ENCODE measurements at regions of chr2 and their contacts with region 1.

Region 1: GRCh38 chr2:138827426-138828054 is 47.4 kb upstream of the NXPH2 start:
- DNase-seq: peak; percentile 13 to 67 (median 32)
- ATAC-seq: peak; percentile 81
- H3K4me3 ChIP-seq: no peak overlapping the region
- H3K27ac ChIP-seq: no peak overlapping the region
- H3K4me1 ChIP-seq: no peaks in the 10 kb centered on the region
- H3K27me3 ChIP-seq: no peaks in the 10 kb centered on the region; a peak in 1 of 5 replicates
- CTCF ChIP-seq: peak; percentile 39 to 75 (median 45); a peak in 5 of 6 replicates
- EP300 ChIP-seq: no peak
- POLR2A ChIP-seq: no peak
- RAD21 ChIP-seq: peak; percentile 85 to 86

Region 2: DNA sequence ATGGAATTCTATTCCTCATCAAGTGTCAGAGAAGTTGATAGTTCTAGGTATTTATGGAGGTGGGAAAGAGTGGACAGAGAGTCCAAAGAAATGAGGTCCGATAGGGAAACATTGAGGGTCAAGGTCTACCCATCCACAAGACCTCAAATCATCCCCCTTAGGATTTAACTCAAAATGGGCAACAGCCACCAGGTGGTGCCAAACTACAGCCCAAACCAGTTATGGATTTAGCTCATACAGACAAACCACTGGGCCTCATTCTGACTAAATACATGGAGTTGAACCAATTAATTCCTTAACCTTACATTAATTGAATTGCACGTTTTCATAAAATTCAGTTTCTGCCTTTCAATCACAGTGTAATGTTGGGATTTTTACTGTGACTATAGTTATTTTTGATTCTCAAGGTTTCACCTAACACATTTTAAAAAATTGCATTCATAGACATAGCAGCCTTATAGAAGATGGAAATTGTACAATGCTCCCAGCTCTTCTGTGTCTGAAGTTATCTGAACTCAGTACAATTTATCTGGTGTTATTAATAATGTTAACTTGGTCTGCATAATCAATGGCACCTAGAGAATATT is 961.5 kb before region 1 on chr2:
- CTCF ChIA-PET with region 1: interaction called, 3 read pairs
- POLR2A ChIA-PET with region 1: no interaction called
- in situ Hi-C with region 1: no loop called
- intact Hi-C with region 1: loop called (anchors 1 kb)
- DNase-seq: peak; percentile 45 to 68 (median 52)
- ATAC-seq: peak; percentile 93
- H3K4me3 ChIP-seq: no peak overlapping the region
- H3K27ac ChIP-seq: no peak overlapping the region
- H3K4me1 ChIP-seq: no peaks in the 10 kb centered on the region
- H3K27me3 ChIP-seq: no peaks in the 10 kb centered on the region
- CTCF ChIP-seq: peak; percentile 68 to 81 (median 74)
- EP300 ChIP-seq: no peak
- POLR2A ChIP-seq: no peak
- RAD21 ChIP-seq: peak; percentile 58 to 87

Region 3: GRCh38 chr2:137910641-137911040 is 916.9 kb before region 1 on chr2:
- CTCF ChIA-PET with region 1: interaction called, 9 read pairs
- POLR2A ChIA-PET with region 1: no interaction called
- in situ Hi-C with region 1: loop called (anchors 10 kb)
- intact Hi-C with region 1: loop called (anchors 1 kb)
- DNase-seq: peak in 2 of 4 experiments; percentile 7 to 21
- ATAC-seq: no peak
- H3K4me3 ChIP-seq: no peak overlapping the region
- H3K27ac ChIP-seq: no peak overlapping the region
- H3K4me1 ChIP-seq: no peaks in the 10 kb centered on the region
- H3K27me3 ChIP-seq: peaks cover 2 to 4% of the 10 kb centered on the region in 2 experiments; a peak in 1 of 5 replicates
- CTCF ChIP-seq: peak in 2 of 3 experiments; percentile 10 to 72; a peak in 4 of 6 replicates
- EP300 ChIP-seq: no peak
- POLR2A ChIP-seq: no peak
- RAD21 ChIP-seq: peak; percentile 72 to 81

Region 4: GRCh38 chr2:138090330-138090729 is 737.2 kb before region 1 on chr2:
- CTCF ChIA-PET with region 1: no interaction called
- POLR2A ChIA-PET with region 1: no interaction called
- in situ Hi-C with region 1: no loop called
- intact Hi-C with region 1: loop called (anchors 2 kb)
- DNase-seq: peak; percentile 23 to 71 (median 52)
- ATAC-seq: peak; percentile 98
- H3K4me3 ChIP-seq: no peak overlapping the region
- H3K27ac ChIP-seq: no peak overlapping the region
- H3K4me1 ChIP-seq: peaks cover 0 to 8% of the 10 kb centered on the region in 2 experiments; a peak in 2 of 5 replicates
- H3K27me3 ChIP-seq: no peaks in the 10 kb centered on the region
- CTCF ChIP-seq: peak; percentile 68 to 94 (median 84)
- EP300 ChIP-seq: no peak
- POLR2A ChIP-seq: no peak
- RAD21 ChIP-seq: peak; percentile 95 to 99

Region 5: GRCh38 chr2:138475277-138475776 is 352.2 kb before region 1 on chr2:
- CTCF ChIA-PET with region 1: no interaction called
- POLR2A ChIA-PET with region 1: no interaction called
- in situ Hi-C with region 1: no loop called
- intact Hi-C with region 1: loop called (anchors 10 kb)
- DNase-seq: no peak
- ATAC-seq: no peak
- H3K4me3 ChIP-seq: no peak overlapping the region
- H3K27ac ChIP-seq: no peak overlapping the region
- H3K4me1 ChIP-seq: peaks cover 6 to 19% of the 10 kb centered on the region in 2 experiments
- H3K27me3 ChIP-seq: no peaks in the 10 kb centered on the region
- CTCF ChIP-seq: no peak
- EP300 ChIP-seq: no peak
- POLR2A ChIP-seq: no peak
- RAD21 ChIP-seq: no peak

Region 6: GRCh38 chr2:138722316-138722715 is 105.2 kb before region 1 on chr2:
- CTCF ChIA-PET with region 1: no interaction called
- POLR2A ChIA-PET with region 1: no interaction called
- in situ Hi-C with region 1: no loop called
- intact Hi-C with region 1: no loop called
- DNase-seq: no peak
- ATAC-seq: peak; percentile 53
- H3K4me3 ChIP-seq: no peak overlapping the region
- H3K27ac ChIP-seq: no peak overlapping the region
- H3K4me1 ChIP-seq: no peaks in the 10 kb centered on the region
- H3K27me3 ChIP-seq: peaks cover 0 to 4% of the 10 kb centered on the region in 2 experiments; a peak in 1 of 5 replicates
- CTCF ChIP-seq: no peak
- EP300 ChIP-seq: no peak
- POLR2A ChIP-seq: no peak
- RAD21 ChIP-seq: no peak